ENCODE measurements at regions of chr5 and their contacts with region 1.

Region 1: DNA sequence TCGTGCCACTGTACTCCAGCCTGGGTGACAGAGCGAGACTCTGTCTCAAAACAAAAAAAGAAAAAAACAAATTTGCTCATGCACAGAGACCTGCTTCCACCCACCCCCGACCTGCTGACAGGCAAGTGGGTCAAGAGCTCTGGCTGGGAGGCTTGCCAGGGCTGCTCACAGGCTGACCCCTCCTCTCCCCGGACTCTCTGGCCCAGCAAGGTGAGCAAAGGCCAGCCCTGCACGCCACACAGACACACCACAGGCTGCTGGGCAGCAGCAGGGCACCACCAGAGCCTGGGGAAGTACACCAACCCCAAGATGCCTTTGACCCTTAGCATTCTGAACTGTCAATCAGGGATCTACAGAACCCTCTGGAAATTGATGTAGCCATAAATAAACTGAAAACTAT is 29.2 kb downstream of the NSUN2 start:
- DNase-seq: no peak
- H3K4me3 ChIP-seq: no peak overlapping the region
- CTCF ChIP-seq: no peak

Region 2: DNA sequence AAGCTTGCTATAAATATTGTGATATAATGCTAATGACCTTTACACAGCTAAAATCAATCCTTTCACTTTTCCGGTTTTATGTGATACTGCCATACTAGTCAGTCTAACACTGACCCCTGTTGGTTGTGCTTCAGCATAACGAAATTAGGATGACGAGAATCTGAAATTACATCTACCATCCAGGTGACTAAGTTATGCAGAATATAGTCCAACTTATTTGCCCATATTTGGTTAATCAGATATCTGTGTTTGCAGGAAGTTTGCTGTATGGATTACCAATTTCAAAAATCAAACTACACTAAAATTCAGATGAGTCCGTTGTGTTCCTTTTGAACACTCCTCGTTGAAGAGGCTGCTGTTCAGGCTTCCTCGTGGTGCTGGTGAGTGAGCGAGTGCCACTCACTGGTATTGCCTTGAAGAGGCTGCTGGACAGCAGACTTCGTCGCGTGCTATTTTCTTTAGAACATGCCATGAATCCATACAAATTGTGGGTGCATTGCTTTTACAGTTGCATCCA is 142.1 kb after region 1 on chr5:
- in situ Hi-C with region 1: loop called (anchors 25 kb)
- DNase-seq: peak; percentile 64
- H3K4me3 ChIP-seq: no peak overlapping the region
- CTCF ChIP-seq: peak; percentile 76